GM12878 (cell line): ENCODE measurements at regions of chr9 and their contacts with region 1.

Region 1: GRCh38 chr9:133023117-133023890 is 7.5 kb upstream of the GTF3C5 start:
- DNase-seq: peak; percentile 23
- ATAC-seq: peak; percentile 75
- H3K4me3 ChIP-seq: no peak overlapping the region
- H3K27ac ChIP-seq: no peak overlapping the region
- H3K4me1 ChIP-seq: peaks cover 11% of the 10 kb centered on the region
- H3K27me3 ChIP-seq: no peaks in the 10 kb centered on the region
- CTCF ChIP-seq: no peak
- EP300 ChIP-seq: no peak
- POLR2A ChIP-seq: no peak
- RAD21 ChIP-seq: no peak

Region 2: GRCh38 chr9:132973713-132974112 is 49.6 kb before region 1 on chr9:
- CTCF ChIA-PET with region 1: interaction called, 16 read pairs
- POLR2A ChIA-PET with region 1: no interaction called
- RAD21 ChIA-PET with region 1: interaction called, 5 read pairs
- SMC1A ChIA-PET with region 1: interaction called, 6 read pairs
- in situ Hi-C with region 1: no loop called
- intact Hi-C with region 1: loop called (anchors 1 kb)
- DNase-seq: no peak
- ATAC-seq: peak; percentile 24; the same call in 1 of the 3 replicates
- H3K4me3 ChIP-seq: no peak overlapping the region
- H3K27ac ChIP-seq: no peak overlapping the region
- H3K4me1 ChIP-seq: no peaks in the 10 kb centered on the region
- H3K27me3 ChIP-seq: peaks cover 2% of the 10 kb centered on the region in 2 experiments; a peak in 1 of 4 replicates
- CTCF ChIP-seq: no peak
- EP300 ChIP-seq: no peak
- POLR2A ChIP-seq: no peak
- RAD21 ChIP-seq: no peak

Region 3: GRCh38 chr9:133004091-133004998 is 19.0 kb before region 1 on chr9:
- CTCF ChIA-PET with region 1: interaction called, 15 read pairs
- POLR2A ChIA-PET with region 1: no interaction called
- RAD21 ChIA-PET with region 1: interaction called, 3 read pairs
- SMC1A ChIA-PET with region 1: interaction called, 3 read pairs
- in situ Hi-C with region 1: no loop called
- intact Hi-C with region 1: no loop called
- DNase-seq: no peak
- ATAC-seq: no peak; the same call in 2 of the 3 replicates
- H3K4me3 ChIP-seq: no peak overlapping the region
- H3K27ac ChIP-seq: no peak overlapping the region
- H3K4me1 ChIP-seq: no peaks in the 10 kb centered on the region
- H3K27me3 ChIP-seq: peaks cover 3% of the 10 kb centered on the region in 2 experiments; a peak in 3 of 4 replicates
- CTCF ChIP-seq: no peak
- EP300 ChIP-seq: no peak
- POLR2A ChIP-seq: no peak
- RAD21 ChIP-seq: no peak

Region 4: DNA sequence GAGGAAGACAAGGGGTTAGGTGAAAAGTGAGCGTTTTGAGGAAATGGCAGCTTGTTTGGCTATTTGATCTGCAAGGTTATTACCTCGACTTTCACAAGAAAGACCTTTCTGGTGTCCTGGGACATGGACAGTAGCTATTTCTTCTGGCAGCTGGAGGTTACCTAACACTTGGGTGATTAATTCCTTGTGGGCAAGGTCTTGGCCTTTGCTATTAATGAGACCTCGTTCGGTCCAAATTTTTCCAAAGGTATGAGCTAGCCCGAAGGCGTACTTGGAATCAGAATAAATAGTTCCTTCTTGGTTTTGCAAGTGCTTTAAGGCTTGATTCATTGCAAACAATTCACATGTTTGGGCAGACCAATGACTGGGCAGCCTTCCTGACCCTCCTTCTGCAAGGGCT is 12.4 kb after region 1 on chr9:
- CTCF ChIA-PET with region 1: interaction called, 52 read pairs
- POLR2A ChIA-PET with region 1: no interaction called
- RAD21 ChIA-PET with region 1: interaction called, 16 read pairs
- SMC1A ChIA-PET with region 1: interaction called, 31 read pairs
- in situ Hi-C with region 1: no loop called
- intact Hi-C with region 1: no loop called
- DNase-seq: no peak
- ATAC-seq: no peak
- H3K4me3 ChIP-seq: no peak overlapping the region
- H3K27ac ChIP-seq: no peak overlapping the region
- H3K4me1 ChIP-seq: peaks cover 6% of the 10 kb centered on the region
- H3K27me3 ChIP-seq: no peaks in the 10 kb centered on the region
- CTCF ChIP-seq: no peak
- EP300 ChIP-seq: no peak
- POLR2A ChIP-seq: no peak
- RAD21 ChIP-seq: no peak

Region 5: GRCh38 chr9:133144137-133144903 is 121.0 kb after region 1 on chr9:
- CTCF ChIA-PET with region 1: interaction called, 25 read pairs
- POLR2A ChIA-PET with region 1: interaction called, 3 read pairs
- RAD21 ChIA-PET with region 1: interaction called, 11 read pairs
- SMC1A ChIA-PET with region 1: interaction called, 11 read pairs
- in situ Hi-C with region 1: no loop called
- intact Hi-C with region 1: loop called (anchors 5 kb)
- DNase-seq: peak; percentile 72
- ATAC-seq: peak; percentile 81
- H3K4me3 ChIP-seq: peak overlapping the region; percentile 60; the same call in 1 of the 2 replicates
- H3K27ac ChIP-seq: peak overlapping the region; percentile 13; the same call in 1 of the 2 replicates
- H3K4me1 ChIP-seq: peaks cover 48% of the 10 kb centered on the region
- H3K27me3 ChIP-seq: no peaks in the 10 kb centered on the region
- CTCF ChIP-seq: peak; percentile 95 to 99 (median 98); a peak in 5 of 6 replicates
- EP300 ChIP-seq: no peak; a peak in 1 of 4 replicates
- POLR2A ChIP-seq: no peak
- RAD21 ChIP-seq: peak; percentile 75

Region 6: DNA sequence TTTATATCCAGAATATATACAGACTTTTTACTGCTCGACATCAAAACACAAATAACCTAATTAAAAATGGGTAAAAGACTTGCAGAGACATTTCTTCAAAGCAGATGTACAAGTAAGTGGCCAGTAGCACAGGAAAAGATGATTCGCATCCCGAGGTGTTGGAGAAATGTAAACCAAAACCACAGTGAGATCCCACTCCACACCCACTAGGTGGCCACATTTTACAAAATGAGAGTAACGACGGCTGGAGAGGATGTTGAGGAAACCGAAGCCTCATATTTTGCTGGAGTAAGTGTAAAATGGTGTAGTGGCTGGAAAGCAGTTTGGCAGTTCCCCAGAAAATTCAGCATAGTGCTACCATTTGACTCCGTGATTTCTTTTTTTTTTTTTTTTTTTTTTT is 161.7 kb after region 1 on chr9:
- CTCF ChIA-PET with region 1: interaction called, 12 read pairs
- POLR2A ChIA-PET with region 1: no interaction called
- RAD21 ChIA-PET with region 1: no interaction called
- SMC1A ChIA-PET with region 1: no interaction called
- in situ Hi-C with region 1: no loop called
- intact Hi-C with region 1: no loop called
- DNase-seq: no peak
- ATAC-seq: peak; percentile 53
- H3K4me3 ChIP-seq: no peak overlapping the region
- H3K27ac ChIP-seq: no peak overlapping the region
- H3K4me1 ChIP-seq: no peaks in the 10 kb centered on the region
- H3K27me3 ChIP-seq: peaks cover 3 to 5% of the 10 kb centered on the region in 2 experiments
- CTCF ChIP-seq: peak; percentile 40 to 47 (median 44); a peak in 4 of 6 replicates
- EP300 ChIP-seq: no peak
- POLR2A ChIP-seq: no peak
- RAD21 ChIP-seq: peak; percentile 40